ENCODE measurements at regions of chr7 and their contacts with region 1.

Region 1: DNA sequence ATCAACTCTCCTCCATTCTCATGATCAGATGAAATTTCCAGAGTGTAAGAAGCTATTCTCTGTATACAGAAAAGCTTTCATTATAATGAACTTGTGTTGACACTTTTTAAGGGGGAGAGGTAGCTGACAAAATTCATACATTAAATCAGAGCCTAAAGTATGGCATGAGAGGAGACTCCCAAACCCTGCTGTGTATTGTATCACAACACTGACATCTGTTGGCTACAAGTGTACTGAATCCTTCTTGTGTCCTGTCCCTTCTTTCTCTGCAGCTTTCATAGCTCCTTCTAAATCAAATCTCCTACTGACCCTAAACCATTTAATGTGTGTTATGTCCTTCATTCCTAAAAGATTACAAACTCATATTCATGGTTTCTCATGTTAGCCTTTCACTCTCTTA is 70.9 kb downstream of the GCC1 start:
- DNase-seq: no peak
- ATAC-seq: peak; percentile 51 to 62 (median 60)
- H3K4me3 ChIP-seq: no peak overlapping the region
- H3K27ac ChIP-seq: no peak overlapping the region
- H3K4me1 ChIP-seq: no peaks in the 10 kb centered on the region
- H3K27me3 ChIP-seq: peaks cover 0 to 19% (median 0%) of the 10 kb centered on the region in 9 donors
- CTCF ChIP-seq: peak in 9 of 12 donors; percentile 15 to 53 (median 41)
- POLR2A ChIP-seq: no peak

Region 2: GRCh38 chr7:126803060-126803665 is 711.3 kb before region 1 on chr7:
- intact Hi-C with region 1: loop called in 3 of 10 experiments (anchors 10 kb)
- DNase-seq: no peak
- ATAC-seq: peak in 1 of 4 donors; percentile 34
- H3K4me3 ChIP-seq: no peak overlapping the region
- H3K27ac ChIP-seq: no peak overlapping the region
- H3K4me1 ChIP-seq: no peaks in the 10 kb centered on the region
- H3K27me3 ChIP-seq: peaks cover 0 to 8% (median 0%) of the 10 kb centered on the region in 9 donors
- CTCF ChIP-seq: peak; percentile 28 to 64 (median 48)
- POLR2A ChIP-seq: no peak

Region 3: DNA sequence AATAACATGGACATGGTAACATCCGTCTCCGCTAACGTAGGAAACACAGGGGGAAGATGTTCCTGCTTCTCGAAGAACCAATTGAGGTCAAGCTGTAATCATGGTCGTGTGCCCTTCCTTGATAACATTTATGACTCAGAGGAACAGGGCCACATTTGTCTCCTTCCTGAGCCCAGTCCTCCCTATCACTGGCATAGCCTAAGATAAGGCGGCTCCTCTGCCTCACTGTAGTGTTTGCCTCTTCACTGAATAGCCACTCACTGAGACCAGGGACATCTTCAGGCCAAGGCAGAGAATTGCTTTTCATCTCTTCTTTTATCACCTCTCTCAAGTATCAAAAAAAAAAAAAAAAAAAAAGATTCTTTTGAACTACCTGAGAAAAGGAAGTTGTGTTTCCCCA is 256.4 kb before region 1 on chr7:
- intact Hi-C with region 1: no loop called
- DNase-seq: no peak
- ATAC-seq: no peak
- H3K4me3 ChIP-seq: no peak overlapping the region
- H3K27ac ChIP-seq: no peak overlapping the region
- H3K4me1 ChIP-seq: peaks cover 0 to 6% (median 0%) of the 10 kb centered on the region in 12 donors
- H3K27me3 ChIP-seq: peaks cover 0 to 54% (median 17%) of the 10 kb centered on the region in 9 donors
- CTCF ChIP-seq: no peak
- POLR2A ChIP-seq: no peak

Measured in heart left ventricle (tissue), 16 donors.